ENCODE measurements at regions of chr10 and their contacts with region 1.

Region 1: GRCh38 chr10:58781873-58782488 is 269.3 kb downstream of the BICC1 start:
- DNase-seq: peak; percentile 10 to 52
- H3K4me3 ChIP-seq: no peak overlapping the region
- H3K4me1 ChIP-seq: no peaks in the 10 kb centered on the region
- H3K27me3 ChIP-seq: no peaks in the 10 kb centered on the region

Region 2: DNA sequence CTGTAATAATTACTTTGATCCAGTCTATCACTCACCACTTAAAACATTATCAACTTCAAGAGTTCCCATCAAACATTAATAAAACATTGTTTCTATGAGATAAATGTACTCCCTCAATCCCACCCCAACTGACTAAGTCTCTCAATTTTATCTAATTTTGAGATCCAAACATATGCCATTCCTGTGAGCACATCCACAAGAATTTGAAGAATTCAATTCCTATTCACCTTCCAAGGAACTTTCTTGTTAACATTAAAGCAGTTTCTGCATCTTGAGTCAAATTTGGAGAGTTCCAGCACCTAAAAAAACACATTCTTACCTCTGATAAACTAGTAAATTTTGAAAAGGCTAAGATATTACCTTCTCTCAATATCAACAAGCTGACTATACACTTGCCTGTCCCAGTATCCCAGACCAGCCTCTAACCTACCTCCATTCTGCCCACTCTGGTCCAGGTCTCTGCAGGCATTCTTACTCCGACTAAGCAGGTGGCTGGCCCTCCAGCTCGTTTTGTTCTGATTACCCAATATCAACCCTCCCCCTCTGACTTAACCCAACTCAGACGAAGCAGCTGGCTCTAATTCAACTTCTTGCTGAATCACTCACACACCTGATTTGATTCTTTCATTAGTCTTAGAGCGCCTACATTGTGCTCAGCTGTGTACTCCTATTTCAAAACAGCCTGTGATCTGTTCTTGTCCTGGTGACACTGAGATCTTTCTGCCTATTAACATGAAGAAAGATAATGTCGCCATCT is 789.5 kb before region 1 on chr10:
- in situ Hi-C with region 1: no loop called
- DNase-seq: no peak
- H3K4me3 ChIP-seq: no peak overlapping the region
- H3K4me1 ChIP-seq: no peaks in the 10 kb centered on the region; the same call in 1 of the 2 replicates
- H3K27me3 ChIP-seq: no peaks in the 10 kb centered on the region

Region 3: DNA sequence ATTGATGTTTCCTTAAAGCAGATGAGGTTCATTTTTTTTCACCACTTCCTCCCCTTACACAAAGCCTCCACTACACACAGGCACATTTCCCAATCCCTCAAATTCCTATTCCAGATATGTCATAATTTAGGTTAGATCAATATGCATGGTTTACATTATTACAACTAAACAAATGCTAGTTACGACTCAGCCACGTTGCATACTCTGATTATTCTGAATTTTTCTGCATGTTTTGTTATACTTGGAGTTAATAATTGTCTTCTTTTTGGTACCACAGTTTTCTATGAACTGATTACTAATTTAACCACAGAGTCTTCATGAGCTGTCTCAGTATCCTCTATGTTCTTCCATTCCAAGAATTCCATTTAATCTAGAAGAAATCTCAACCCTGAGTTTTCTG is 273.7 kb before region 1 on chr10:
- in situ Hi-C with region 1: no loop called
- DNase-seq: no peak
- H3K4me3 ChIP-seq: no peak overlapping the region
- H3K4me1 ChIP-seq: peaks cover 3% of the 10 kb centered on the region; the same call in 1 of the 2 replicates
- H3K27me3 ChIP-seq: 0 out of 2 replicates have a peak, but pooled peaks cover 7% of the 10 kb centered on the region

Region 4: DNA sequence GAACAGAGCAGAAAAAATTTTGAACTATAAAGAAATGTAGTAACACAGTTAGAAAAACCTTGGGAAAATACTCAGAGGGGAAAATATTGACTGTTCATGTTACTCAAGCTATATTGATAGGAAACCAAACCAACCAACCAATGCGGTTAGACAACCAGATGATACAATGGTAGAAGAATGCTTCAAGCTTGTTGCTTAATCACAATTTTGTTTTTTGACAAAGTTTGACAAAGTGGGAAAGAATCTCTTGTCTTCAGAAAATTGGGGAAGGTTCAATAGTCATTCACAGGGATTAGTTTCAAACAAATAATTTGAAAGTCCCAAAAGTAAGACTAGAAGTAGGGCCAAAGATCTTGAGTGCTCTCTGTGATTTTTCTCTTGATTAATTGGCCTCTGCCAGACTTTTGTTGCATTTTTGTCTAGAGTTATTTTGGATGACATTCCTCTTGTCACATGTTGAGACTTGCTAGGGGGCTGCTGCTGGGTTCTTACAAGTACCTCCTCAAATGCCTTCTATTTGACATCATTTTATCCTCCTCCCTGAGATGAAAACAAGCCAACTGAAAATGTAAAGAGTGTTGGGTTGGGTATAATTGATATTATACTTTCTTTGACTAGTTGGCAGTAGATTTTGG is 161.4 kb after region 1 on chr10:
- in situ Hi-C with region 1: loop called (anchors 10 kb)
- DNase-seq: no peak
- H3K4me3 ChIP-seq: no peak overlapping the region
- H3K4me1 ChIP-seq: no peaks in the 10 kb centered on the region
- H3K27me3 ChIP-seq: no peaks in the 10 kb centered on the region; the same call in 1 of the 2 replicates

Region 5: GRCh38 chr10:59222788-59223187 is 440.8 kb after region 1 on chr10:
- in situ Hi-C with region 1: loop called (anchors 25 kb)
- DNase-seq: no peak
- H3K4me3 ChIP-seq: no peak overlapping the region
- H3K4me1 ChIP-seq: no peaks in the 10 kb centered on the region
- H3K27me3 ChIP-seq: no peaks in the 10 kb centered on the region

Measured in HAP-1 (cell line).